PC-3 (cell line): ENCODE measurements at regions of chr2 and their contacts with region 1.

Region 1: DNA sequence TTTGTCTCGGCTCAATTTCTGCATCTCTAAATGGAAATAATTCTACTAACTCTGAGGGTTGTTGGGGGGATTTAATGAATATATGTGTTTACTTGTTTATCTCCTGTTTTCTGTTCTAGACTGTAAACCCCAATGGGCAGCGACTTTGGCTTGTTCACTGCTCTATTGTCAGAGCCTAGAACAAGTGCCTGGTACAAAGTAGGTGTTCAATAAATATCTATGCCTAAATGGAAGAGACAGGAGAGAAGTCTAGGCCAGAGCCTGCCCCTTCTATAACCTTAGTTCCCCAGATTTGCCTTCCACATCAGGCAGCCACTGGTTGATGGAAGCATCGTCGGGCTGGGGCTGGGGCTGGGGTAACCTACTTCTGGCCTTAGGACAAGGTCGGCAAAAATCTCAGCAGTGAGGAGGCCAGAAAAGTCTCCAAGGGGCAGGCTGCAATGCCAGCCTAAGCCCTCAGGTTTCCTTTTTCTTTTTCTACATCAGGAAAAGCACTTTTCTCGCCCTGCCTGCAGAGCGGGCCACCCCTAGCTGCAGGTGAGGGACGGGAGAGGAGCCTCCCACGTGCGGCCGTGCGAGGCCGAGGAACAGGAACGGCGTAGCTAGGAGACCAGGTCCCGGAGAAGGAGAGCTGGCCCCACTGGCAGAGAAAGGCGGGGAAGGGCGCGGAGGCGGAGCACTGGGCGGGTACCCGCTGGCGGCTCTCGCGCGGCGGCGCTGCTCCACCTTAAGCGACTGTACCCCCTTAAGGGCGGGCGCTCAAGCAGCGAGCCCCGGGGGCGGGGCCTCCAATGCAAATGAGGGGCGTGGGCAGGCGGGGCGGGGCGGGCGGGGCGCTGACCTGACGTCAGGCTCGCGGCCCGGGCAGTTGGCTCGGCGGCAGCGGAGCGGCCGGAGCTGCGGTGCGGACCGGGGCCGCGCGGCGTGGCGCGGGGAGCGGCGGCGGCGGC is at the start of gene CNNM4:
- DNase-seq: peak; percentile 94
- ATAC-seq: peak; percentile 88
- H3K4me3 ChIP-seq: peak within 1 kb of the TSS; percentile 93
- H3K27ac ChIP-seq: peak within 1 kb of the TSS; percentile 20; the same call in 1 of the 2 replicates
- H3K4me1 ChIP-seq: peaks cover 42% of the 10 kb centered on the region
- H3K27me3 ChIP-seq: no peaks in the 10 kb centered on the region
- CTCF ChIP-seq: no peak
- total RNA-seq, gene CNNM4: 12.5 and 15.1 TPM in 2 replicates

Region 2: DNA sequence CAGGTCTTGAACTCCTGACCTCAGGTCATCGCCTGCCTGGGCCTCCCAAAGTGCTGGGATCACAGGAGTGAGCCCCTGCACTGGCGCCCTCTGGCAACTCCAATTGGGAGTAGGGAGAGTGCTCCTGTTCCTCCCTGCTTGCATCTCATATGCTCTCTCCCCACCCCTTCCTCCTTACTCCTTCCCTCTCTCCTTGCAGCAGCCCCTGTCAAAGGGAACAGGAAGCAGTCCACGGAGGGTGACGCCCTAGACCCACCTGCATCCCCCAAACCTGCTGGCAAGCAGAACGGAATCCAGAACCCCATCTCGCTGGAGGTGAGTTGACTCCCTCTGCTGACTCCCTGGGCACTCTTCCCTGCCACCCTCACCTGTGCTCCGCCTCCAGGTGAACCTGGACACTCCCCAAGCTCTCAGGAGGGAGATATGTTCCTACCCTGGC is 213.1 kb before region 1 on chr2:
- CTCF ChIA-PET with region 1: no interaction called
- POLR2A ChIA-PET with region 1: interaction called, 19 read pairs
- intact Hi-C with region 1: no loop called
- DNase-seq: no peak
- ATAC-seq: no peak
- H3K4me3 ChIP-seq: no peak overlapping the region
- H3K27ac ChIP-seq: no peak overlapping the region
- H3K4me1 ChIP-seq: no peaks in the 10 kb centered on the region
- H3K27me3 ChIP-seq: no peaks in the 10 kb centered on the region
- CTCF ChIP-seq: no peak

Region 3: GRCh38 chr2:96638144-96639121 is 121.9 kb before region 1 on chr2 and contains the start of gene KANSL3:
- CTCF ChIA-PET with region 1: no interaction called
- POLR2A ChIA-PET with region 1: no interaction called
- intact Hi-C with region 1: loop called (anchors 5 kb)
- DNase-seq: peak; percentile 96
- ATAC-seq: peak; percentile 70
- H3K4me3 ChIP-seq: peak within 1 kb of the TSS; percentile 77
- H3K27ac ChIP-seq: peak within 1 kb of the TSS; percentile 77
- H3K4me1 ChIP-seq: peaks cover 18% of the 10 kb centered on the region; the same call in 1 of the 2 replicates
- H3K27me3 ChIP-seq: no peaks in the 10 kb centered on the region
- CTCF ChIP-seq: no peak
- total RNA-seq, gene KANSL3: 30.6 and 35.7 TPM in 2 replicates

Region 4: DNA sequence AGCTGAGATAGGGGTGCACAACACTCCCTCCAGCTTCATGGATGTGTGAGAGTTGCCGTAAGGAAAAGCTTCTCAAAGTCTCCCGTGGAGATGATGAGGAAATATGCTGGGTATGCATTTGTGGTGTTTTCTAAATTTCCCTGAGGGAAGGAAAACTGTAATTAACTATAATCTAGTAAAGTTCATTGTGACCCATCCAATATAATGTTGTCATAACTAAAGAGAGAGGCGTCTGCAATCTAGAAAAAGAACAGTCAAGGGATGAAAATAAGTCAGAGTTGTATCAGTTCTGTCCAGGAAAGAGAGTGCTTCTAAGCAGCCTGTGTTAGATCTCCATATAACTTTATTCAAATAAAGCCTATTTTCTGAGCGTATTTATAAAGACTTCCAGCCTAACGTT is 13.2 kb before region 1 on chr2:
- CTCF ChIA-PET with region 1: no interaction called
- POLR2A ChIA-PET with region 1: no interaction called
- intact Hi-C with region 1: no loop called
- DNase-seq: no peak
- ATAC-seq: no peak
- H3K4me3 ChIP-seq: no peak overlapping the region
- H3K27ac ChIP-seq: no peak overlapping the region
- H3K4me1 ChIP-seq: no peaks in the 10 kb centered on the region
- H3K27me3 ChIP-seq: no peaks in the 10 kb centered on the region
- CTCF ChIP-seq: no peak

Region 5: GRCh38 chr2:96788442-96789244 is 28.3 kb after region 1 on chr2:
- CTCF ChIA-PET with region 1: interaction called, 19 read pairs
- POLR2A ChIA-PET with region 1: no interaction called
- intact Hi-C with region 1: loop called (anchors 1 kb)
- DNase-seq: peak; percentile 55
- ATAC-seq: peak; percentile 56
- H3K4me3 ChIP-seq: no peak overlapping the region
- H3K27ac ChIP-seq: peak overlapping the region; percentile 79
- H3K4me1 ChIP-seq: peaks cover 29% of the 10 kb centered on the region
- H3K27me3 ChIP-seq: no peaks in the 10 kb centered on the region
- CTCF ChIP-seq: no peak

Region 6: GRCh38 chr2:96856776-96857673 is 96.7 kb after region 1 on chr2:
- CTCF ChIA-PET with region 1: no interaction called
- POLR2A ChIA-PET with region 1: no interaction called
- intact Hi-C with region 1: loop called (anchors 5 kb)
- DNase-seq: peak; percentile 48
- ATAC-seq: peak; percentile 14
- H3K4me3 ChIP-seq: peak overlapping the region; percentile 73
- H3K27ac ChIP-seq: no peak overlapping the region; the same call in 1 of the 2 replicates
- H3K4me1 ChIP-seq: peaks cover 11% of the 10 kb centered on the region
- H3K27me3 ChIP-seq: no peaks in the 10 kb centered on the region
- CTCF ChIP-seq: no peak

Region 7: GRCh38 chr2:96985181-96985945 is 225.1 kb after region 1 on chr2:
- CTCF ChIA-PET with region 1: no interaction called
- POLR2A ChIA-PET with region 1: no interaction called
- intact Hi-C with region 1: no loop called
- DNase-seq: no peak
- ATAC-seq: no peak
- H3K4me3 ChIP-seq: no peak overlapping the region
- H3K27ac ChIP-seq: no peak overlapping the region
- H3K4me1 ChIP-seq: no peaks in the 10 kb centered on the region
- H3K27me3 ChIP-seq: peaks cover 29% of the 10 kb centered on the region
- CTCF ChIP-seq: no peak